Left lung (tissue), 14 donors: ENCODE measurements at regions of chr6 and their contacts with region 1.

Region 1: DNA sequence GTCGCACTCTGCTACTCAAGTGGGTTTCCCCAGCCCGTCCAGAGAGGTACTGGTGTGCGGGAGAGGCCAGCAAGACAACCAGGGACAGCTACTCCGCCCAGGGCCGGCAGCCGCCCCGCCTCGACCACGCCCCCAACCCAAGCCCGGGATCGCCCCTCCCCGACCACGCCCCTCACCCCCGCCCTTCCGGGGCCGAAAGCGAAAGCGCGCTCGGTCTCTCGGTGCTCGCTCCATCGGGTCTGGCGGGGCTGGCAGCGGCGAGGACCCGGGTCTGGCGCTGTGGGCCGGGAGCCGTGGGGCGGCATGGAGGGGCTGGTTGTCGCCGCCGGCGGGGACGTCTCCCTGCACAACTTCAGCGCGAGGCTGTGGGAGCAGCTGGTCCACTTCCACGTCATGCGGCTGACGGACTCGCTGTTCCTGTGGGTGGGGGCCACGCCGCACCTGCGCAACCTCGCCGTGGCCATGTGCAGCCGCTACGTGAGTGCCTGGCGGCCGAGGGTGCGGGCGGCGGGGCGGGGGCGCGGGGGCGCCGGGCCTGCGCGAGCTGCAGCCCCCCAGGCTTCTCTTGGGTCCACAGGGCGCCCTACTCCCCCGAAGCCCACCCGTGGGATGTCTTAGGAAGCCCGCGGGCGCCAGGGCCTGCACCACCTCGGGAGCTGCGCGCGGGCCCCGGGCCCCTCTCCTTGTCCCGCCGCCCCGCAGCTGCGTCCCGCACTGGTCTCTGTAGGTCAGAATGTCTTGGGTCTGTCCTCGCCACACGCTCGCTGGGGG is at the start of gene PSMG4:
- DNase-seq: peak; percentile 88 to 100 (median 96)
- ATAC-seq: peak; percentile 99
- H3K4me3 ChIP-seq: peak within 1 kb of the TSS; percentile 82 to 100
- H3K27ac ChIP-seq: peak within 1 kb of the TSS; percentile 65 to 80
- H3K4me1 ChIP-seq: peaks cover 5 to 37% of the 10 kb centered on the region in 2 donors
- H3K27me3 ChIP-seq: peaks cover 0 to 3% of the 10 kb centered on the region in 2 donors
- CTCF ChIP-seq: no peak
- polyA plus RNA-seq, gene PSMG4: 18.6 to 27.5 (median 23.0) TPM

Region 2: GRCh38 chr6:3139090-3139903 is 119.6 kb before region 1 on chr6:
- intact Hi-C with region 1: loop called in 1 of 2 experiments (anchors 10 kb)
- DNase-seq: peak in 1 of 4 donors; percentile 81
- ATAC-seq: peak; percentile 94
- H3K4me3 ChIP-seq: no peak overlapping the region
- H3K27ac ChIP-seq: peak overlapping the region; percentile 17 to 57
- H3K4me1 ChIP-seq: peaks cover 0 to 20% of the 10 kb centered on the region in 2 donors
- H3K27me3 ChIP-seq: no peaks in the 10 kb centered on the region
- CTCF ChIP-seq: no peak